ENCODE measurements at regions of chr14 and their contacts with region 1.

Region 1: GRCh38 chr14:103067233-103067954 is 10.0 kb upstream of the CDC42BPB start:
- DNase-seq: peak; percentile 74
- H3K4me3 ChIP-seq: no peak overlapping the region
- H3K27ac ChIP-seq: peak overlapping the region; percentile 23
- H3K4me1 ChIP-seq: peaks cover 21% of the 10 kb centered on the region
- H3K27me3 ChIP-seq: no peaks in the 10 kb centered on the region
- CTCF ChIP-seq: peak in 1 of 2 donors; percentile 22

Region 2: DNA sequence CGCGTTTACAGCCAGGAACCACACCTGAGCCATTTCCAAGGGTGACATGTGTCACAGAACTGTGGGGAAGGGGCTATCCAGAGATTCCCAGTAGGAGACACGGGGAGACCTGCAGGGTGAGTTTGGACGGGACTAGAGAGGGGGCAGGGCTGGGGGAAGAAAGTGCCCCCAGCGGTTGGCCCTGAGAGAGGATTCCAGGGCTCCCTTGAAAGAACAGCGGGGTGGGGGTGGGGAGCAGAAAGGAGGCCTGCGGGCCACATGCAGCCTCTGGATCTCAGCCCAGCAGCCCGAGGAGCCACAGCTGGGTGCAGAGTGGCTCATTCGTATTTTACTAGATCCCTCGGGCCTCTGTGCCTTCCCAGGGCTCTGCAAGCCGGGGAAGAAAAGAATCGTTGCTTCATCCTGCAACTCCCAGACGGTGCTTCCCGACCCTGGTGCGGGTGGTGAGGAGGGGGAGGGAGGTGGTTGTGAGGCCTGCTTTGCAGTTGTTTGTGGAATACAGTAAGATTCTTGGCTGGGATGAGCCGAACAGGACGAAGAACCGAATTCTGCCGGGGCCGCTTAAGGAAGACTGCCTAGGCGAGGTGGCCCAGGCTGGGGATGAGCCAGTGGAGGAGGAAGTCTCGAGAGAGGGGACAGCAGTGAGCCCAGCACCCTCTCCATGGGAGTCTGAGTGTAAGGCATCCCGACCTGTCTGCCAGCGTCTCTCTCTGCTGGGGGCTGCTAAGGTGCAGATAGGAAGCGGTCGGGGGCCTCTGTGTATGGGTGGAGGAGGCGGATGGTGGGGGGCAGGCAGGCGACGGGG is 521.7 kb before region 1 on chr14:
- CTCF ChIA-PET with region 1: interaction called, 19 read pairs
- dilution Hi-C with region 1: no loop called
- in situ Hi-C with region 1: no loop called
- intact Hi-C with region 1: no loop called
- DNase-seq: no peak
- H3K4me3 ChIP-seq: no peak overlapping the region
- H3K27ac ChIP-seq: no peak overlapping the region
- H3K4me1 ChIP-seq: peaks cover 19% of the 10 kb centered on the region
- H3K27me3 ChIP-seq: no peaks in the 10 kb centered on the region
- CTCF ChIP-seq: peak in 1 of 2 donors; percentile 3

Region 3: DNA sequence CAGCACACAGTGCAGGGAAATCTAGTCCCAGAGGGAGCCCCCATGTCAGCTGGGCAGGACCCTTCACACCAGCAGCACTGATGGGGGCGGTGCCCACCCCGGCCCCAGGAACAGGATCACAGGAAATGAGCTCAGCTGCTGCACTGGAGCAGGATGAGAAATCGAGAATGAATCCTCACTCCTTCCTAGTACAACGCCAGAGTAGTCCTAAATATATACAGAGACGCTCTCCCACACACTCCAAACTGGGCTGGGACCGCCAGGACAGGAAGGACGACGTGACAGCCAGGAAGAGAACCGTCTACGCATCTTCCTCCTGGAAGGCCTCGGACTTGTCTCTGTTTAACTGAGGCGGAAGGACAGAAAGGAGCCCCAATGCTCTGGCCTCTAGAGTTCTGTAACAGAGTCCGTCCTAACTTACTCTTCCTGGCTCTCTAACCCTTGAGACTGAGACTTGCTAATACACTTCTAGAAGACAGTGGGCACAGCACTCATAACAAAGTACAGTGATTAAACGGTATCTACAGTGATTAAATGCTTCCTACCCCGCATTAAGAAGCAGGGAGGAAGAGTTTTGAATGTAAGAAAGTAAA is 43.4 kb before region 1 on chr14:
- CTCF ChIA-PET with region 1: no interaction called
- dilution Hi-C with region 1: loop called (anchors 5 kb)
- in situ Hi-C with region 1: no loop called
- intact Hi-C with region 1: no loop called
- DNase-seq: no peak
- H3K4me3 ChIP-seq: no peak overlapping the region
- H3K27ac ChIP-seq: no peak overlapping the region
- H3K4me1 ChIP-seq: peaks cover 14% of the 10 kb centered on the region
- H3K27me3 ChIP-seq: no peaks in the 10 kb centered on the region
- CTCF ChIP-seq: no peak